ENCODE measurements at regions of chr2 and their contacts with region 1.

Region 1: GRCh38 chr2:37319754-37320609 is 4.7 kb downstream of the PRKD3 start:
- DNase-seq: no peak
- ATAC-seq: no peak
- H3K4me3 ChIP-seq: no peak overlapping the region
- H3K4me3 Mint-ChIP-seq: no peak overlapping the region
- H3K27ac ChIP-seq: no peak overlapping the region
- H3K27ac Mint-ChIP-seq: peak overlapping the region in 1 of 2 donors; percentile 18
- H3K4me1 ChIP-seq: peaks cover 11 to 16% of the 10 kb centered on the region in 2 experiments
- H3K4me1 Mint-ChIP-seq: peaks cover 73 to 80% (median 74%) of the 10 kb centered on the region in 3 donors
- H3K27me3 ChIP-seq: peaks cover 0 to 2% of the 10 kb centered on the region in 2 experiments
- H3K27me3 Mint-ChIP-seq: peaks cover 0 to 3% of the 10 kb centered on the region in 2 donors

Region 2: GRCh38 chr2:37231241-37232130 is 88.5 kb before region 1 on chr2 and contains the starts of genes CEBPZ and NDUFAF7:
- CTCF ChIA-PET with region 1: no interaction called
- POLR2A ChIA-PET with region 1: interaction called in 1 of 2 experiments, 13 read pairs
- DNase-seq: peak; percentile 74 to 92 (median 85)
- ATAC-seq: peak; percentile 93 to 94 (median 94)
- H3K4me3 ChIP-seq: peak within 1 kb of the TSS; percentile 76 to 93
- H3K4me3 Mint-ChIP-seq: no peak within 1 kb of the TSS
- H3K27ac ChIP-seq: peak within 1 kb of the TSS; percentile 89
- H3K27ac Mint-ChIP-seq: no peak within 1 kb of the TSS
- H3K4me1 ChIP-seq: peaks cover 23 to 27% of the 10 kb centered on the region in 2 experiments
- H3K4me1 Mint-ChIP-seq: peaks cover 34 to 48% (median 40%) of the 10 kb centered on the region in 3 donors
- H3K27me3 ChIP-seq: no peaks in the 10 kb centered on the region
- H3K27me3 Mint-ChIP-seq: no peaks in the 10 kb centered on the region
- total RNA-seq, gene CEBPZ: 50.6 to 61.5 (median 58.1) TPM
- total RNA-seq, gene NDUFAF7: 20.2 to 30.3 (median 24.6) TPM

Region 3: GRCh38 chr2:37307500-37307899 is 12.5 kb before region 1 on chr2:
- CTCF ChIA-PET with region 1: interaction called in 1 of 2 experiments, 7 read pairs
- POLR2A ChIA-PET with region 1: interaction called, 5 to 10 read pairs
- DNase-seq: no peak
- ATAC-seq: no peak
- H3K4me3 ChIP-seq: no peak overlapping the region
- H3K4me3 Mint-ChIP-seq: no peak overlapping the region
- H3K27ac ChIP-seq: no peak overlapping the region
- H3K27ac Mint-ChIP-seq: no peak overlapping the region
- H3K4me1 ChIP-seq: peaks cover 0 to 9% of the 10 kb centered on the region in 2 experiments
- H3K4me1 Mint-ChIP-seq: peaks cover 54 to 58% (median 55%) of the 10 kb centered on the region in 3 donors
- H3K27me3 ChIP-seq: no peaks in the 10 kb centered on the region
- H3K27me3 Mint-ChIP-seq: no peaks in the 10 kb centered on the region

Measured in T-cell (primary cell).